Mucosa of descending colon (tissue), 3 donors: ENCODE measurements at regions of chr9 and their contacts with region 1.

Region 1: GRCh38 chr9:18208154-18209059 is 265.5 kb upstream of the ADAMTSL1 start:
- DNase-seq: peak; percentile 43 to 90 (median 70)
- ATAC-seq: peak; percentile 90
- H3K4me3 ChIP-seq: no peak overlapping the region
- H3K4me1 ChIP-seq: no peaks in the 10 kb centered on the region
- CTCF ChIP-seq: peak; percentile 48

Region 2: GRCh38 chr9:17600962-17601593 is 607.3 kb before region 1 on chr9:
- intact Hi-C with region 1: no loop called
- DNase-seq: no peak
- ATAC-seq: no peak
- H3K4me3 ChIP-seq: no peak overlapping the region
- H3K4me1 ChIP-seq: no peaks in the 10 kb centered on the region
- CTCF ChIP-seq: no peak

Region 3: DNA sequence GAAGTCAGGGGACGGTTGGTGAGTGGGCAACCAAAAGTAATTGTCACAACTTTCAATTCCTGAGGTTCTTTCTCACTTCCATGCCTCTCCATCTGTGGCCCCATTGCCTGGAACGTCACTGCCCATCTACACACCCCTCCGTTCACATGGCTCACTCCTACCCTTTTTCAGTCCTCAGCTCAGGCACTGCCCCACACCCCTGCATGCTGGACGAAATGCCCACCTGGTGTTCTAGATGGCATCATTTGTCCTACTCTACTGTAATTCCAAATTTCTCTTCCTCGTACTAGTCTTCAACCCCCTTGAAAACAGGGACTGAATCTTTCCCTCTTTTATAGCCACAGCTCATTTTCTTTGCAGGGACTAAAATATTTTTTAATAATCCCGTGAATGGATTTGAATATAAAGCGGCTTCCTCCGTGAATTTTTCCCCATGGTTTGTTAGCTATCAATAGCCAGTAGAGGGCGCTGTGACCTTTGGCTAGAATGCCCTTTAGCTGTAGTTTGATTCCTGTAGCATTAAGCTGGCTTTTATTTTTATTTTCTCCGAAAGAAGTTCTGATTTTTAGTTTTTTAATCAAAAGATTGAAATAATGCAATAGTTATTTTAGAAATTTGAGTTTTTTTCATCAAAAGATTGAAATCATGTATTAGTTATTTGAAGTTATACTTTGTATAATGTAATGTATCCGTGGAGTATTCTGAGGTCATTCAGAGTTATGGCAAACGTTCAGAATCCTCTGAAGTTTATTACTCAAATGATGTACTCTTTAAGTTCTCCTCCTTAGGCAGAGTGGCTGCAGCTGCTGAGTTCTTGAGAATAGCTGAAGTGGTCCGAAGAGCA is 397.5 kb before region 1 on chr9:
- intact Hi-C with region 1: loop called (anchors 5 kb)
- DNase-seq: peak in 1 of 3 donors; percentile 85
- ATAC-seq: peak; percentile 67
- H3K4me3 ChIP-seq: no peak overlapping the region
- H3K4me1 ChIP-seq: peaks cover 7% of the 10 kb centered on the region
- CTCF ChIP-seq: peak; percentile 40

Region 4: DNA sequence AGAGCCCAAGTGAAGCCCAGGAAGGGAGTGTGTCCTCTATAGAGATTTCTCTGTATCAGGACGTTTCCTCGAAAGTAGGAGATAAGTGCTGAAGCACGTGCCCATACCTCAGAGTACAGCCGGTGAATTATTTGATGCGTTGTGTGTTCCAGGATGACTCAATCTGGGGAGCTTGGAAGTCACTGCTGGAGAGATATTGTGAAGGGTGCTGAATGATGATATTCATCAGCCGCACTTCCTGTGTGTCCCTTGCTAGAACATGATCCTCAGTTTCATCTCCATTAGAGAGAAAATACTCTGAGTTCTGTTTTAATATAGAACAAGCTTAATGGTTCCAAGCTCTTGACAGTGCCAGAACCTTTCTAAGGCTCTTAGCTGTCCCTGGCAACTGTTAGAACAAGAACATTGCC is 136.8 kb before region 1 on chr9:
- intact Hi-C with region 1: loop called in 1 of 2 experiments (anchors 10 kb)
- DNase-seq: no peak
- ATAC-seq: no peak
- H3K4me3 ChIP-seq: no peak overlapping the region
- H3K4me1 ChIP-seq: peaks cover 23% of the 10 kb centered on the region
- CTCF ChIP-seq: no peak